ENCODE measurements at regions of chr1 and their contacts with region 1.

Region 1: DNA sequence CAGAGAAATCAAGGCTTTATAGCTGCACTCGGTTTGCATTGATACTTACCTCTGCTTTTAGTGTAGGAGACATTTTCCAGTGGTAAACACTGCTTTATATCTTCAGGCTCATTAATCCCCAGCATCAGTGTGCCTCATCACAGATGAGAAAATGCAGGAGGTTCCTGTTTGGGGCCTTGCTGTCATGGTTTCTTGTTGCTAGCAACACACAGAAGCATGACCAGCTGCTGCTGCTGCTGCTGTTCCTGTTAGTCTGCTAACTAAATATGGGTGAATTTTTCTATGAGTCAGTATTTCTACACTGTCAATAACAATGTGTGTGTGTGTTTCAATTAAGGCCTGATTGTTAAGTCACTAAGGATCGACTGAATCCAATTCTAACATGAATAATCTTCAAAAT is 85.8 kb upstream of the RGS1 start:
- DNase-seq: peak in 1 of 2 donors; percentile 64
- ATAC-seq: peak in 7 of 8 donors; percentile 85 to 97 (median 91)
- H3K4me3 ChIP-seq: no peak overlapping the region
- H3K27ac ChIP-seq: peak overlapping the region in 7 of 10 donors; percentile 23 to 58 (median 44)
- H3K4me1 ChIP-seq: peaks cover 0 to 32% (median 9%) of the 10 kb centered on the region in 9 donors
- H3K27me3 ChIP-seq: no peaks in the 10 kb centered on the region
- CTCF ChIP-seq: no peak

Region 2: GRCh38 chr1:192592981-192593708 is 103.4 kb after region 1 on chr1:
- intact Hi-C with region 1: loop called in 1 of 10 experiments (anchors 5 kb)
- DNase-seq: no peak
- ATAC-seq: no peak
- H3K4me3 ChIP-seq: no peak overlapping the region
- H3K27ac ChIP-seq: no peak overlapping the region
- H3K4me1 ChIP-seq: no peaks in the 10 kb centered on the region
- H3K27me3 ChIP-seq: no peaks in the 10 kb centered on the region
- CTCF ChIP-seq: no peak